Endothelial cell of umbilical vein (primary cell): ENCODE measurements at regions of chr5 and their contacts with region 1.

Region 1: DNA sequence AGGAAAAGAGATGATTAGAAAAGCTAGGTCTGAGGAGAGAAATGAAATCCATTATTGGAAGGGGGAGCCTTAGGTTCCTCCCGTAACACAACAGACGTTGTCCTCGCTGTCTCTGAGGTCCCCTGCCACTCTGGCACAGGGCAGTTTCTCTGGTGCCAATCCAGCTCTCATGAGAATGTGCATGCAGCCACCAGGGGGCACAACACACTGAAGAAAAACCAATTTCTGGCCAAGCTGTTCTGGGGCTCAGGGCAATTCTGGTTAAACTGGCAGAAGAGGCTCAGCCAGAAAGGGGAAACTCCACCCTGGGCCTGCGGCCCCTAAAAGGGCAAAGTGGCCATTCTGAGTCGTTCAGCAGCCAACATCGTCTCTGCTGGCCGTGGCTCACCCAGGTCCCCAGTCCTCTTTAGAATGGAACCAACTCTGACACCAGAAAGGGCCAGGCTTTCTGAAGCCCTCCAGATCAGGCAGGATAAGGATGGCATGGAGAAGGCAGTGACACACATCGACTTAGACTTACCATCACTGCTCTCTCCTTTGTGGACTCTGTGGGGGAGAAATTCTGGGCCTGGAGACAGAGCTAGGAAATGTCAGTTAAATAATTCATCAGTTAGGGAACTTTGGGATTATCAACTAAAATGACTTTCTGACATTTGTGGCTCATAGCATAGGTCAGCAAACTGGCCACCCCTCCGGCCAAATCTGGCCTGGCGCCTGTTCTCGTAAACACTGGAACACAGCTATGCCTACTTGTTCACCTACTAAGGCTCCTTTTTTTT is 58.5 kb upstream of the GOLPH3 start:
- DNase-seq: peak; percentile 77
- H3K4me3 ChIP-seq: no peak overlapping the region
- H3K27ac ChIP-seq: no peak overlapping the region
- H3K4me1 ChIP-seq: peaks cover 16% of the 10 kb centered on the region
- H3K27me3 ChIP-seq: no peaks in the 10 kb centered on the region
- CTCF ChIP-seq: peak; percentile 79 to 84
- POLR2A ChIP-seq: no peak

Region 2: DNA sequence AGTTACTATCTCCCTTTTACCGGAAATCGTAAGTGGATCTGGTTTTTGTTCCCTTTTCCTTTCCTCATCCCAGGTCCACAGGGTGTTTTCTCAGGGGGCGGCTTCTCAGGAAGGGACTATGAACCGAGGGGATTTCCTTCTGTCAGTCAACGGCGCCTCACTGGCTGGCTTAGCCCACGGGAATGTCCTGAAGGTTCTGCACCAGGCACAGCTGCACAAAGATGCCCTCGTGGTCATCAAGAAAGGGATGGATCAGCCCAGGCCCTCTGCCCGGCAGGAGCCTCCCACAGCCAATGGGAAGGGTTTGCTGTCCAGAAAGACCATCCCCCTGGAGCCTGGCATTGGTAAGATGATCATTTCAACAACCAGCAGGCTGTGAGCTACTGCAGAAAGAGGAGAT is 134.3 kb before region 1 on chr5:
- CTCF ChIA-PET with region 1: interaction called, 6 read pairs
- POLR2A ChIA-PET with region 1: no interaction called
- dilution Hi-C with region 1: no loop called
- intact Hi-C with region 1: loop called (anchors 1 kb)
- DNase-seq: peak; percentile 96
- H3K4me3 ChIP-seq: peak overlapping the region in 1 of 3 experiments; percentile 43
- H3K27ac ChIP-seq: peak overlapping the region; percentile 96
- H3K4me1 ChIP-seq: peaks cover 45% of the 10 kb centered on the region
- H3K27me3 ChIP-seq: no peaks in the 10 kb centered on the region
- CTCF ChIP-seq: no peak
- POLR2A ChIP-seq: no peak

Region 3: GRCh38 chr5:32249646-32250045 is 17.0 kb after region 1 on chr5:
- CTCF ChIA-PET with region 1: interaction called, 10 read pairs
- POLR2A ChIA-PET with region 1: no interaction called
- dilution Hi-C with region 1: no loop called
- intact Hi-C with region 1: no loop called
- DNase-seq: no peak
- H3K4me3 ChIP-seq: no peak overlapping the region
- H3K27ac ChIP-seq: no peak overlapping the region
- H3K4me1 ChIP-seq: no peaks in the 10 kb centered on the region
- H3K27me3 ChIP-seq: no peaks in the 10 kb centered on the region
- CTCF ChIP-seq: no peak
- POLR2A ChIP-seq: no peak

Region 4: DNA sequence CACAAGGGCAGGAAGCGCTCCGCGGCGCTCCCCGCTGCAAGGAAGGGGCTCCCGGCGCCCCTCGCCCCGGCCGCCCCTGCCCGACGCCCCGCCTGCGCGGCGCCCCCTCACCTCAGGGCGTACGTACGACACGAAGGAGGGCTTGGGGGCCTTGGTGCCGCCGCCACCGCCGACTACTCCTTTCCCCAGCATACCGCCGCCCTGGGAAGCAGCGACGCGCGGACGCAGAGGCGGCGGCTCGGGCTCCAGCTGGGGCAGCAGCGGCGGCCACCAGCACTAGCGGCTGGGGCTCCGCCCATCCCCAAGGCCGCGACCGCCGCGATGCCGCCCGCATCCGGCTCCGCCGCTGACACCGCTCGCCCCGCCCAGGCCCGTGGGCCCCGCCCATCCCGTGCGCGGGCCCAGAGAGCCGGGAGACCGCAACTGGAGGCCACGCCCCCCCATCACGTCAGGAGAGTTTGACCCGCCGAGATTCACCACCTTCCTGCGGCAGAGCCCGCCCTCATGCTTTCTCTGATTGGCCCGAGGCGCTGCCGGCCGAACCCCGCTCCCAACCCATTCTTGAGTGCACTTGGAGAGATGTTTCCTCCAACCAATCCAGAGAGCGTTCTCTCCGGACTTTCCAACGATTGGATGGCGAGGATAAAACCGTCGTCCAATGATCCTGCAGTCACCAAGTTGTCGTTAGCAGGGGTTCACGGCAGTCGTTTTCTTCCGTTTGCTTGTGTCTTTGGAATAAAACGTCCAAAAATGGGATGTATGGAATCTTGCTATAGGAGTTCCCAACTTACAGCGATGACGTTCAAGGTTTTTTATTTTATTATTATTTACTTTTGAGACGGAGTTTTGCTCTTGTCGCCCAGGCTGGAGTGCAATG is 80.3 kb after region 1 on chr5 and contains the start of gene MTMR12:
- CTCF ChIA-PET with region 1: interaction called, 16 read pairs
- POLR2A ChIA-PET with region 1: no interaction called
- dilution Hi-C with region 1: no loop called
- intact Hi-C with region 1: loop called (anchors 2 kb)
- DNase-seq: peak; percentile 100
- H3K4me3 ChIP-seq: peak within 1 kb of the TSS; percentile 55 to 88 (median 80)
- H3K27ac ChIP-seq: peak within 1 kb of the TSS; percentile 92
- H3K4me1 ChIP-seq: peaks cover 7% of the 10 kb centered on the region
- H3K27me3 ChIP-seq: no peaks in the 10 kb centered on the region
- CTCF ChIP-seq: no peak
- POLR2A ChIP-seq: peak; percentile 60
- total RNA-seq, gene MTMR12: 35.4 and 38.6 TPM in 2 replicates

Region 5: DNA sequence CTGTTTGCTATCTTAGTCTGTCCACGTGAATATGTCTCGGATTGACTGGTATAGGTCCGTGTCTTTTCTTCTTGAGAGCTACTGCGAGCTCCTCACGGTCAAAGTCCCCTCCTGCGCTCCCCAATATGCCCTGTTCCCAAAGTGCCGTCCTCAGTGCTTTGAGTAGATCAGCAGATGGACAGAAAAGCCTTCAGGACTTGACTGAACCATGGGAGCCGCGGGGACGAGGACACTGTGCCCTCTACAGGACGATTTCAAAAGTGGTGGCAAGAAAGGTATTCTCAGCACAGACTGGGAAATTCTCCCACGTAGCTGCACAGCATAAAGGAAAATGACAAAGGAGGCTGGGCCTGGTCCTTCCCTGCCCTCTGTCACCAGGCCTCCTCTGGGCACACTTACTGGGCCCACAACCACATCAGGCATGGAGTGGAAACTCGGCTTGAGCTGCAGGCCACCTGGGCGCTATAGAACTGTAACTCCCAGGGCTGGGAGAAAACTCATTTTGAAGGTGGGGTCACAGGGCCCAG is 96.7 kb after region 1 on chr5:
- CTCF ChIA-PET with region 1: interaction called, 325 read pairs
- POLR2A ChIA-PET with region 1: interaction called, 3 read pairs
- dilution Hi-C with region 1: no loop called
- intact Hi-C with region 1: loop called (anchors 1 kb)
- DNase-seq: peak; percentile 80
- H3K4me3 ChIP-seq: no peak overlapping the region
- H3K27ac ChIP-seq: no peak overlapping the region
- H3K4me1 ChIP-seq: no peaks in the 10 kb centered on the region
- H3K27me3 ChIP-seq: no peaks in the 10 kb centered on the region
- CTCF ChIP-seq: peak; percentile 60 to 80
- POLR2A ChIP-seq: no peak

Region 6: DNA sequence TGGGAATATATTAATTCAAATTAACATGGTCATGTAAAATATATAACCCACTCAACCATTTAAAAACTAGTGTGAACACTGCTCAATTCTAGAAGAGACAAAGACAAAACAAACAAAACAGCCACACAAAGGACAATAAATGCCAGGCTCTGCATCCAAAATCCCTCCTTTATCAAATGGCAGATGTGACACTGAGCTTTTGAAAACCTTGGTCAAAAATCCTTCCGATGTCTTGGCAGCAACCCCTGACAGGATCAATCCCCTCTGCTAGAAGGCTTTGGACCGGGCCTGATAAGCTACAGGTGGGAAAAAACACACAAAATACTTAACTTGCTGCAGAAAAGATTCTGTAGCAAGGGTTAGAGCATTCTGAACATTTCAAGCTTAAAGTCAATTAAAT is 150.4 kb after region 1 on chr5:
- CTCF ChIA-PET with region 1: interaction called, 15 read pairs
- POLR2A ChIA-PET with region 1: no interaction called
- dilution Hi-C with region 1: no loop called
- intact Hi-C with region 1: no loop called
- DNase-seq: no peak
- H3K4me3 ChIP-seq: no peak overlapping the region
- H3K27ac ChIP-seq: no peak overlapping the region
- H3K4me1 ChIP-seq: no peaks in the 10 kb centered on the region
- H3K27me3 ChIP-seq: no peaks in the 10 kb centered on the region
- CTCF ChIP-seq: no peak
- POLR2A ChIP-seq: no peak